Transverse colon (tissue), 4 donors: ENCODE measurements at regions of chr17 and their contacts with region 1.

Region 1: DNA sequence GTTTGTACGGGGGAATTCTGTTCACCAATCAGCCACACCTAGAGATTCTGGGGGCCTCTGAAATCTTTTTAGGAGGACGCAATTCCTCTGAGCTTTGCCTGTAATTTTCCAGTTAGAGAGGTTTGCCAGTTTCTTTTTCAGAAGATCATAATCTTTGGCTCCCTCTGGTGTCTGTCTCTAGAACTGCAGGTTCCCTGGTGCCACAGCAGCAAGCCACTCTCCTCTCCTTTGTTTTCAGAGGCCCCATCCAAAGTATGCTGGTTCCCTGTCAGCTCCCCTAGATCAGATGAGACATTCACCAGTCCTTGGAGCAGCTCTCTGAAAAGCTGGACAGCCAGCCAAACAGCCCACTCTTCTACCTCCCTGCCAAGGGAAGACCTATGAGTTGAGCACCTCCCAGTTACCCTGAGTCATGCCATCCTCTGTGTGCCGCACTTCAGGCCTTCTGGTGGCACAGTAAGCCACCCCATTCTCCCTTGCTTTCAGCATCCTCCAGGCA is 36.1 kb downstream of the RNF112 start:
- DNase-seq: peak; percentile 80
- H3K4me3 ChIP-seq: no peak overlapping the region
- H3K27ac ChIP-seq: peak overlapping the region; percentile 68 to 88 (median 84)
- H3K4me1 ChIP-seq: peaks cover 12 to 33% (median 25%) of the 10 kb centered on the region in 4 donors
- H3K27me3 ChIP-seq: no peaks in the 10 kb centered on the region
- CTCF ChIP-seq: peak; percentile 95 to 99 (median 96)
- EP300 ChIP-seq: no peak
- POLR2A ChIP-seq: no peak

Region 2: DNA sequence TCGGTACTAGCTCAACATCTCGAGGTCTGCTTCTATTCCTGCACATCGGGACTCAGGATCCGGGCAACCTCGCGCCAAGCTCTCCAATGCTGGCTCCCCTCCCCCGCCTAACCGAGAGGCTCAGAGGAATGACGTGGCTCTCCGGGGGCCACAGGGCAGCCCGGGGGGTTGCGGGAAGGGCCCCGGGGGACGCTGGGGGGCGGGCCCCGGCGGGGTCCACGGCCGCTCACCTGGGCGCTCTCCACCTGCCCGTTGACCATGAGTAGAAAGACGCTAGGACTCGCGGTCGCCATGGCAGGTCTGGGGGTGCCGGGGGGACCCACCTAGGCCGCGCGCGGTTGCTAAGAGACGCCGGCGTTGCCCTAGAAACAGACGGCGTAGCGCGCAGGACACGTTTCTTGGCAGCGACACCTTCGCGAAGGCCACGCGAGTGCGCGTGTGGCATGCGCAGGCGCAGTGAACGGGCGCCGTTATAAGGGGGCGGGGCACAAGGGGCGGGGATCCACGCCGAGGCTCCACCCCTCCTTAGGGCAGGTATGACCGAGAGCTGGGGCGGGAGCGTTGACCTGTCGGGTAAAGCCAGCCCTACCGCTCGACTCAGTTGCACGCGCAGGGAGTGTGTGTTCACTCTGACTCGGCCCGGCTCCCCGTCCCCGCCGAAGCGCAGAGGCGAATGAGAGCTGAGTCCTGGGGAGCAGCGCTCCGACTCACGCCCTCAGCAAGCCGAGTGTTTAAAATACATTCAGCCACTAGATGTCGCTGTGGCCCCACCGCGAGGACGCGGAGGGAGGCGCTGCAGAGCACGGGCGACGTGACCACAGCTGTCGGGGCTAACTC is 84.6 kb before region 1 on chr17 and contains the start of gene B9D1:
- in situ Hi-C with region 1: loop called (anchors 5 to 10 kb)
- intact Hi-C with region 1: loop called (anchors 1 kb)
- DNase-seq: peak; percentile 96
- H3K4me3 ChIP-seq: peak within 1 kb of the TSS; percentile 61 to 78 (median 69)
- H3K27ac ChIP-seq: peak within 1 kb of the TSS; percentile 71 to 88 (median 85)
- H3K4me1 ChIP-seq: peaks cover 8 to 14% (median 12%) of the 10 kb centered on the region in 4 donors
- H3K27me3 ChIP-seq: no peaks in the 10 kb centered on the region
- CTCF ChIP-seq: peak; percentile 95 to 100 (median 98)
- EP300 ChIP-seq: no peak
- POLR2A ChIP-seq: no peak
- total RNA-seq, gene B9D1: 6.0 to 17.6 (median 9.5) TPM

Region 3: DNA sequence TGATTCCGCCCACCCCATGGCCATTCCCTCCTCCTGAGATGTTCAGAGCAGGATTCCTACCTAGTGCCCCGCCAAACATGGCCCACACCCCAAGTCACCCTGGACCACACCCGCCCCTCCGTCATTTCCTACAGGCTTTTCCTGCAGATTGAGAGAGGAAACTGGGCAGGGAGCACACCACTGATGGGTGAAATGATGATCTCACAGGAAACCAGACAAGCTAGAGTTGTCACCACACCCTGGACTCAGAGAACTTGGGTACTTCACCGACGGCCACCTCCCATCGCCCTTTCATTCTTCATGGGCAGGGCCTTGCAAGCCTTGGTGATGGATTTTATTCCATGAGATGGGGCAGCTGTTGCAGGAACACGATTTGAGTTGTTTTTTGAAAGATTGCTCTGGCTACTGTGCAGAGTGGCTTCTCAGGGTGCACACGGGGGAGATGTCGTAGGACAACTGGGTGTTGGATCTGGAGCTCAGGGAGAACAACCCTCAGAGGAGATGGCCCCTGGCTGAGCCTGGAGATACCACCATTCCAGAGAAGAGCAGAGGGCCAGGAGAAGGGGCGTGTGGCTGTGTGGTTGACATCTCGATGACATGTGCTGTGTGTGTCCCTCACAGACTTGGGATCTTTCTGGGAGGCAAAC is 77.2 kb before region 1 on chr17:
- in situ Hi-C with region 1: loop called in 3 of 4 experiments (anchors 5 to 10 kb)
- intact Hi-C with region 1: no loop called
- DNase-seq: peak; percentile 43
- H3K4me3 ChIP-seq: no peak overlapping the region
- H3K27ac ChIP-seq: peak overlapping the region in 1 of 4 donors; percentile 5
- H3K4me1 ChIP-seq: peaks cover 0 to 12% (median 4%) of the 10 kb centered on the region in 4 donors
- H3K27me3 ChIP-seq: no peaks in the 10 kb centered on the region
- CTCF ChIP-seq: no peak
- EP300 ChIP-seq: no peak
- POLR2A ChIP-seq: no peak

Region 4: GRCh38 chr17:19377602-19378392 is 69.3 kb before region 1 on chr17:
- in situ Hi-C with region 1: no loop called
- intact Hi-C with region 1: loop called (anchors 2 kb)
- DNase-seq: peak; percentile 99
- H3K4me3 ChIP-seq: peak overlapping the region; percentile 46 to 86 (median 78)
- H3K27ac ChIP-seq: peak overlapping the region; percentile 91 to 98 (median 95)
- H3K4me1 ChIP-seq: peaks cover 6 to 28% (median 24%) of the 10 kb centered on the region in 4 donors
- H3K27me3 ChIP-seq: no peaks in the 10 kb centered on the region
- CTCF ChIP-seq: no peak
- EP300 ChIP-seq: no peak
- POLR2A ChIP-seq: peak; percentile 84

Region 5: DNA sequence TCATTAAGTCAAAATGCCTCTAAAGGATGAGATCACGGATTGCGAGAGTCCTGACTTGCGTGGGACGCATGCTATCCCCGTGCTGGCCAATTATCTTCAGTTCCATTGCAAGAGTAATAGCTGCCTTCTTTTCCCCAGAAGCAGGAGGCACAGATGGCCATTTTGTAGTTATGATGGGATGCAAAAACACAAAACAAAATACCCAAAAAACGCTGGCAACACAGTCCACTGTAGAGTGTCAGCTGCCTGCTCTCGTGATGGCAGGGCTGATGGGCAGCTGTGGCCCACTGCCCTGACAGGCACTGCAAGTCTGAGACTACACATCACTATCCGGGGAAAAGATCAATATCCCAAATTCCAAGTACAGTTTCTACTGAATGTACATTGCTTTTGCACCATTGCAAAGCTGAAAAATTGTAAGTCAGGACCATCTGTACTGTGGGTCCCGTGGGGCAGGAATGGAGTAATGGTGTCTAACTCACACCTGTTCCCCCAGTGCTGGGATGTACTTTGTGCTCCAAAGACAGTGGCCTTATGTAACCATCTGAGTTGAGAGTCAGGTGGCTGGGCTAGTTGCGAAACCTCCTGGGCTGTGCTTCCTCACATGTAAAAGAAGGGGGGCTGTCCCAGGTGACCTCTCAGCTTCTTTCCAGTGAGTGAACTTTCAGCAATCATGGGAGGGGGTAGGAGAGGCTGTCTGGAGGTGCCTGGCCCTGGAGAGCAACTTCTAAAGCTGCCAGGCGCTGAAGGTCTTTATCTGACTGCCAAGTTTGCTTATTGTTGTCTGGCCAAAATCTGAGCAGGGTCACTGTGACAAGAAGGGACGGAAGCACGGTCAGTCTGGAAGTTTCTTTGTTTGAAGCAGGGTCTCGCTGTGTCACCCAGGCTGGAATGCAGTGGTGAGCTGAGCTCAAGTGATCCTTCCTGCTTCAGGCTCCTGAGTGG is 91.2 kb after region 1 on chr17:
- in situ Hi-C with region 1: no loop called
- intact Hi-C with region 1: no loop called
- DNase-seq: peak; percentile 38
- H3K4me3 ChIP-seq: no peak overlapping the region
- H3K27ac ChIP-seq: no peak overlapping the region
- H3K4me1 ChIP-seq: peaks cover 0 to 14% (median 8%) of the 10 kb centered on the region in 4 donors
- H3K27me3 ChIP-seq: peaks cover 25% of the 10 kb centered on the region
- CTCF ChIP-seq: no peak
- EP300 ChIP-seq: no peak
- POLR2A ChIP-seq: no peak

Region 6: DNA sequence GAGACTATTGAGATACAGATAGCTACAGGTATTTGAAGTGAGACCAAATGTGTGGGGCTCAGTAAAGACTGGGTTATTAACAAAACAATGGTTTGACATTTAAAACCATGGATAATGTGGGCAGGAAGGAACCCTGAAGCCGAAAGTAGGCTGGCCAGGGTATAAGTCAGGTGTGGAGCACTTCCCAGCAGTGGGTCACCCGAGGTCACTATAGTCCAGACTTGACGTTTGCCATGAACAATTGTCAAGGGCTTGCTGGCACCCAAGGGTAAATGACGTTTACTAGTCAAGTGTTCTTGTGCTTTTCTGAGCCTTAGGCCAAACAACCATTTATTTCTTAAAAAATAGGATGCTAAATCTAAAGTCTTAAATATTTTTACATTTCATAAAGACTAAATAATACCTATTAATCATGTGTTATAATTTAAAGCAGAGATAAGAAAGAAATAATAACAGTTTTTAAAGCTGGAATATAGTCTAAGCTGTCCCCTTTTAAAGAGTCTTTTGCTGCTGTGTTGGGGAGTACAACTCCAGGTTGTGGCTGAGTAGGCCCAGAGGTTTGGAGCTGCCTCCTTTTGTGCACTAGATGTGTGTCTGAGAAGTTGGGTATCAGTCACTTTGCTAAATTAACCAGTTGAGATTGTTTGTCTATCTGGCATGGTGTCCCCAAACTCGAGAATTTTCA is 217.1 kb after region 1 on chr17:
- in situ Hi-C with region 1: no loop called
- intact Hi-C with region 1: no loop called
- DNase-seq: no peak
- H3K4me3 ChIP-seq: no peak overlapping the region
- H3K27ac ChIP-seq: no peak overlapping the region
- H3K4me1 ChIP-seq: peaks cover 0 to 6% (median 1%) of the 10 kb centered on the region in 4 donors
- H3K27me3 ChIP-seq: no peaks in the 10 kb centered on the region
- CTCF ChIP-seq: no peak
- EP300 ChIP-seq: no peak
- POLR2A ChIP-seq: no peak

Region 7: DNA sequence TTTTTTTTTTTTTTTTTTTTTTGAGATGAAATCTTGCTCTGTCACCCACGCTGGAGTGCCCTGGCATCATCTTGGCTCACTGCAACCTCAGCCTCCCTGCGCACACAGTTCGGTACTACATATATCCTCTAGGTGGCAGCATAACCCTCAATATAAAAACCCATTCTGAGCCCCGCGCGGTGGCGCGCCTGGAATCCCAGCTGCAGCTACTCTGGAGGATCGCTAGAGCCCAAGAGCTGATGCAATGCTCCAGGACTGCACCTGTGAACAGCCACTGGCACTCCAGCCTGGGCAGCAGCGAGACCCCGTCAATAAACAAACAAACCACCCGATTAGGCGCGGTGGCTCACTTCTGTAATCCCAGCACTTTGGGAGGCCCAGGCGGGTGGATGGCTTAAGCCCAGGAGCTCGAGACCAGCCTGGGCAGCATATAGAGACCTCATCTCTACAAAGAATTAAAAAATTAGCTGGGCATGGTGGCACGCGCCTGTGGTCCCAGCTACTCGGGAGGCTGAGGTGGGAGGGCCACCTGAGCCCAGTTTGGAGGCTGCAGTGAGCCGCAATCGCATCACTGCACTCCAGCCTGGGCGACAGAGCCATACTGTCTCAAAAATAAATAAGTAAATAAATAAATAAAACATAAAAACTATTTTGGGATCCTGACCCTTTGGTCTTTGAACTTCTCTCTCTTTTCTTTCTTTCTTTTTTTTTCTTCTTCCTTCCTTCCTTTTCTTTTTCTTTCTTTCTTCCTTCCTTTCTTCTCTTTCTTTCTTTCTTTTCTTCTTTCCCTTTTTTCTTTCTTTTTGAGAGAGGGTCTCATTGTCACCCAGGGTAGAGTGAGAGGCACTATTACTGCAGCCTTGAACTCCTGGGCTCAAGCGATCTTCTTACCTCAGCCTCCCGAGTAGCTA is 545.9 kb after region 1 on chr17:
- in situ Hi-C with region 1: no loop called
- intact Hi-C with region 1: no loop called
- DNase-seq: peak; percentile 86
- H3K4me3 ChIP-seq: no peak overlapping the region
- H3K27ac ChIP-seq: no peak overlapping the region
- H3K4me1 ChIP-seq: peaks cover 0 to 11% (median 3%) of the 10 kb centered on the region in 4 donors
- H3K27me3 ChIP-seq: no peaks in the 10 kb centered on the region
- CTCF ChIP-seq: peak; percentile 68 to 82 (median 73)
- EP300 ChIP-seq: no peak
- POLR2A ChIP-seq: no peak